Endothelial cell of umbilical vein (primary cell): ENCODE measurements at regions of chr10 and their contacts with region 1.

Region 1: GRCh38 chr10:27155066-27155754 is at the start of gene MASTL:
- DNase-seq: peak; percentile 95
- H3K4me3 ChIP-seq: peak within 1 kb of the TSS; percentile 74 to 95 (median 75)
- H3K27ac ChIP-seq: peak within 1 kb of the TSS; percentile 92
- H3K4me1 ChIP-seq: peaks cover 13% of the 10 kb centered on the region
- H3K27me3 ChIP-seq: no peaks in the 10 kb centered on the region
- CTCF ChIP-seq: no peak
- POLR2A ChIP-seq: peak; percentile 58
- total RNA-seq, gene MASTL: 16.7 and 17.8 TPM in 2 replicates

Region 2: DNA sequence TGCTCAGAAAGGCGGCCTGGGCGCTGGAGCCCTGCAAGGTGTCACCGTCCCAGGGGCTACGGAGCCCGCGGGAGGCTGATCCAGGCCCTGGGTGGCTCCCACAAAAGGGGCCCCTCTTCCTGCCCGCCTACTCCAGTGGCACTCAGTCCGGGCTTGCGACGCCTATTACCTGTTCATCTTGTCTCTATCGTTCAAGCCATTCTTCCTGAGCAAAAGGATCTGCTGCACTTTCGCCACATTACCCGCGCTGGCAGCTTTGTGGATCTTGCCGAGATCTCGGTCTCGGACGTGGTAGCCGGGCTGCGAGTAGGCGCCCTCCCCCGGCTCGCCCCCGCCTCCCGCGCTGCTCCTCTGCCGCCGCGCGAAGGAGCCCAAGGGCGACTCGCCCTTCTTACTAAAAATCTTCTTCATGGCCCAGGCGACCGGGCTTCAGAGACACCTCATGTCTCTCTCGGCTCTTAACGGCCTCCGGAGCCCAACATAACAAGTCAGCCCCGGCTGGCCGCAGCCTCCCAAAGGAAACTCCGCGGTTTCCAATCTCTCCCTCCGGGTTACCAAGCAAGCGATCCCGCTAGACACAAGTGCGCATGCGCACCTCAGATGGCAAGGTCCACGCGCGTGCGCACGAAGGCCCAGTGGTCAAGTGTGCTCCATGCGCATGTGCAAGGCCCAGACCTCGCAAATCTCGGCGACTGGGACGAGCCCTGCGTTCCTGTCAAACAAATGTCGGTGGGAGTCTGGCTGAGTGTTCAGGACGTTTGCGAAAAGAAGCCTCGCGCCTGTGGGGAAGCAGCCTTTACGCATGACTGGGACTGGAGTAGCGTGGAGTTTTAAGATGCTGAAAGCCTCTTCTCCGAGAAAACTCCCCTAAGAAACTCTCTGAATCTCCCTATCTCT is 55.0 kb before region 1 on chr10 and contains the start of gene ANKRD26:
- CTCF ChIA-PET with region 1: no interaction called
- POLR2A ChIA-PET with region 1: no interaction called
- dilution Hi-C with region 1: no loop called
- intact Hi-C with region 1: loop called (anchors 1 kb)
- DNase-seq: peak; percentile 99
- H3K4me3 ChIP-seq: peak within 1 kb of the TSS; percentile 49 to 90 (median 84)
- H3K27ac ChIP-seq: peak within 1 kb of the TSS; percentile 66
- H3K4me1 ChIP-seq: peaks cover 8% of the 10 kb centered on the region
- H3K27me3 ChIP-seq: no peaks in the 10 kb centered on the region
- CTCF ChIP-seq: peak in 1 of 2 donors; percentile 22
- POLR2A ChIP-seq: peak; percentile 79
- total RNA-seq, gene ANKRD26: 7.2 and 9.5 TPM in 2 replicates

Region 3: DNA sequence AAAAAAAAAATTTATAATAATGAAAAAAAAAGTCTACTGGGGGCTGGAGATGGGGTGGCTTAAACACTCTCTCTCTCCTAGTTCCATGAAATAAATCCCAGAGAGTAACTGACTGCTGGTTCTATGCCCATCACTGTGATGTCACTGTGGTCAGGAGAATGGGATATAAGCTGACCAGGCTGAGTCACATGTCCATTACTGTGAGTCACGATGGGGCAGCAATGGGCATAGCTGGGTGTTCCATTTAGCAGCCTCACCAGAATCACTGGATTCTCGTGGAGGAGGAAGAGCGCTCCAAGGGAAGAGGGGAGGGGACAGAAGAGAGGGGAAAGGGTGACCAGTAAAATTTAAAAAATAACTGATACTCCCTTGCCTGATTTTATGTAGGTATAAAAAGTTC is 37.1 kb after region 1 on chr10:
- CTCF ChIA-PET with region 1: interaction called, 3 read pairs
- POLR2A ChIA-PET with region 1: no interaction called
- dilution Hi-C with region 1: no loop called
- intact Hi-C with region 1: loop called (anchors 1 kb)
- DNase-seq: peak; percentile 66
- H3K4me3 ChIP-seq: no peak overlapping the region
- H3K27ac ChIP-seq: peak overlapping the region; percentile 12
- H3K4me1 ChIP-seq: no peaks in the 10 kb centered on the region
- H3K27me3 ChIP-seq: no peaks in the 10 kb centered on the region
- CTCF ChIP-seq: no peak
- POLR2A ChIP-seq: no peak

Region 4: DNA sequence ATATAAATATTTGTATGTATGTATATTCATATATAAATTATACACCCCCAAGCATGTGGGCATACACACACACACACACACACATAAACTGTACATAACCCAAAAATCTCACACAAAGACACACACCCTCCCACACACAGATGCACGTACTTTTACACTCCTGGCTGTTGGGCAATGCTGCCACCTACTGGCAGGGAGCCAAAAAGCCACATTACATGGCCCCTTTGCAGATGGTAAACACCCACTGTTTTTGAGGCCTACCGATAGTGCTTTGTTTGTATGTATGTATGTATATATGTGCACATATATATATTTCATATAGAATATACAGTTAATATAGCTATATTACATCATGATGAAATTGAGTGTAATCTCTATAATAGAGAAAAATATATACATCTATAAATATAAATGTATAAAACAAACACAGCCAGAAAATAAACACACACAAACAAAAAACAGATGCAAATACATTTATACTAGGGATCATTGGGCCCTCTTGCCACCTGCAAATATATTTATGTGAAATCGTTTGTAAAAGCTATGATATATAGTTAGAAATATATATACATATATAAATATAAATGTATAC is 205.5 kb after region 1 on chr10:
- CTCF ChIA-PET with region 1: no interaction called
- POLR2A ChIA-PET with region 1: no interaction called
- dilution Hi-C with region 1: no loop called
- intact Hi-C with region 1: loop called (anchors 5 kb)
- DNase-seq: peak; percentile 75
- H3K4me3 ChIP-seq: no peak overlapping the region
- H3K27ac ChIP-seq: no peak overlapping the region
- H3K4me1 ChIP-seq: no peaks in the 10 kb centered on the region
- H3K27me3 ChIP-seq: peaks cover 0 to 2% of the 10 kb centered on the region in 2 experiments
- CTCF ChIP-seq: peak; percentile 79 to 82
- POLR2A ChIP-seq: no peak